ENCODE measurements at regions of chr4 and their contacts with region 1.

Region 1: DNA sequence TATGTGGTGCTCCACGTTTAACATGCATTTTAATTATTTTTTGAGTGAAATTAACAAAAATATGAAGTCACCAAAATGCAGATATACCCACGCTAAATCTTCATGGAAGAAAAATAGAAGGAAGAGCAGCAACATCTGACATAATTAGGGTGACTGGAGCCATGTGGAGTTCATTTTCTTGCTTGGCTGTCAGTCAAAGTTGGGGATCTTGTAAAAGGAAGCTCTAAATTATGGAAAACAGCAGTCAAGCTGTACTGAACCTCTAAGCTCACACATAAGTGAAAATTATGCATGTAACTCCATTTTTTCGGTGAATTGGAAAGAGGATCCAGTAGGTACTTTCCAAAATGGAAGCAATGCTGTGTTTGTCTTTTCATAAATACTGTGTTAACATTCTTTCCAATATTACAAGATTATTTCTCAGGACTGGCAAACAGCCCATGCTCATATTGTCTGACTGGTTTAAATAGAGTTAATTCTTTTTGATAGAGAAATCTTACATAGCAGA is 9.7 kb upstream of the PDGFC start:
- DNase-seq: no peak
- H3K4me3 ChIP-seq: no peak overlapping the region
- H3K27me3 ChIP-seq: no peaks in the 10 kb centered on the region
- CTCF ChIP-seq: no peak

Region 2: GRCh38 chr4:156999175-156999516 is 17.8 kb after region 1 on chr4:
- CTCF ChIA-PET with region 1: interaction called, 11 read pairs
- POLR2A ChIA-PET with region 1: interaction called, 3 read pairs
- DNase-seq: peak; percentile 87
- H3K4me3 ChIP-seq: no peak overlapping the region
- H3K27me3 ChIP-seq: no peaks in the 10 kb centered on the region
- CTCF ChIP-seq: no peak

Measured in BJ (cell line).